HEK293 (cell line): ENCODE measurements at regions of chr15 and their contacts with region 1.

Region 1: DNA sequence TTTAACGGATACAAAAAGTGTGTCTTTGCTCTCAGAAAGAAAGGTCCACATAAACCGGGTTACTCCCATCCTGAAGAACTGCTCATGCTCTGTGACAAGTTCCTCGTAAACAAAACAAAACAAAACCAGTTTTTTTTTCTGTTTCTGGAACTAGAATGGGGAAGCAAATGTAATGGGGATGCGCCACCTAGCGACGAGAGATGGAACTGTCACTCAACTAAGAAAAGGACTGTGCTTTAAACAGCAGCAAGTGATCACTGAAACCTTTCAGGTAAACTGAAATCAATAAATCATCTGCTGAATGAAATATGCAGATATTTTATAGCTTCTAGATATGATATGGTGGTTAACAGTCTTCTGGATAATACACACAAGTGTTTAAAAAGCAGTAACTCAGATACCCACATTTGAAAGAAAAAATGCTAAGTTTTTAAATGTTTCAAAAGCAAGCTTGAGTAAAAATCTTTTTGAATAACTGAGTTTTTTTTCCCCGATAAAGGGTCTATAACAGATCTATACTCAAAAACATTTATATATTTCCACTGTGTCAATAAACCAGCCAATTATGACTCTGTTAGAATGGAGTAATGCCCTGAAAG is 10.9 kb downstream of the TM2D3 start:
- H3K4me3 ChIP-seq: no peak overlapping the region
- H3K27ac ChIP-seq: no peak overlapping the region
- H3K4me1 ChIP-seq: peaks cover 4% of the 10 kb centered on the region; the same call in 1 of the 2 replicates
- CTCF ChIP-seq: peak; percentile 73

Region 2: DNA sequence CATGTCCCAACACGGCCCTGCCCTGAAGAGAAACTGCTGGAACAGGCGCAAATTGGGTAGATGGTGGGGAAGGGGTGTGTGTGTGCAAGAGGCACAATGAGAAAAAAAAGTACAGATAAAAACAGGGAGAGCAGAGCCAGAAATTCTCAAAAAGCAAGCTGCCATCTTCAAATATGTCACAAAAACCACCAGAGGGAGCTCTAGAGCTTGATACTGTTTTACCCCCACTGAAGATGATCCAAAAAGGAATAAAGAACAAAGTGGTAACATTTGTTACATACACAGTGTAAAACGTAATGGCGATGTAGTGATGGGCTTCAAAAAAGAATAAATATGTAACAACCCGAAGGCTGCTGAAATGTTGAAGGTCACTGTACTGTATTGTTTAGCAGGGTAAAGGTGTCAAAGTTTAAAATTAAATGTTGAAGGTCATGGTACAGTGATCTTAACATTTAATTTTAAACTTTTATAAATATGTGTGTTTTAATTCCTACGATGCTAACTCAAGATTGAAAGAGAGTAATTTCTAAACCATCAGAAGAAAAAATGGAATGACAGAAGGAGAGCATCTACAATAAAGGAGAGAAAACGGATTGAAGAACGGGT is 352.3 kb before region 1 on chr15:
- CTCF ChIA-PET with region 1: interaction called, 64 read pairs
- POLR2A ChIA-PET with region 1: no interaction called
- H3K4me3 ChIP-seq: no peak overlapping the region
- H3K27ac ChIP-seq: no peak overlapping the region
- H3K4me1 ChIP-seq: peaks cover 3% of the 10 kb centered on the region
- CTCF ChIP-seq: peak; percentile 50; the same call in 1 of the 2 replicates

Region 3: DNA sequence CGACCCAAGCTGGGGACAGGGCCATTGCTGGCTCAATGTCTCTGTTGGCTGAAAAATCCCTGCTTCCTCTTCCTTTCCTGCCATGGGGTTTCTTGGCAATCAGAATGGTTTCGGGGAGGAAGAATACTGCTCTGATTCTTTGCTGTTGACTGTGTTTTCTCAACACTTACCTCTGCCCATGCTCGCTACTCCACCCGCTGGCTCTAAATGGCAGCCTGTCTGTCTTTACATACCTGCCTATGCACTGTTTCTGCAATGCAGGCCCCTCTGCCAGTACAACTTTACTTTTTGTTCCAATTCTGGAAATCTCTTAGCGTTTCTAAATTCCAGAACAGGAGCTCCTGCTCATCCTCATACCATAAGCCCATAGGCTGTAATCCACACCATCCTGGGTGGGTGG is 307.9 kb before region 1 on chr15:
- CTCF ChIA-PET with region 1: interaction called, 13 read pairs
- POLR2A ChIA-PET with region 1: no interaction called
- H3K4me3 ChIP-seq: no peak overlapping the region
- H3K27ac ChIP-seq: no peak overlapping the region
- H3K4me1 ChIP-seq: no peaks in the 10 kb centered on the region
- CTCF ChIP-seq: no peak

Region 4: GRCh38 chr15:101510212-101511197 is 130.8 kb before region 1 on chr15:
- CTCF ChIA-PET with region 1: interaction called, 10 read pairs
- POLR2A ChIA-PET with region 1: no interaction called
- H3K4me3 ChIP-seq: no peak overlapping the region
- H3K27ac ChIP-seq: no peak overlapping the region
- H3K4me1 ChIP-seq: no peaks in the 10 kb centered on the region
- CTCF ChIP-seq: no peak

Region 5: GRCh38 chr15:101579631-101580141 is 61.6 kb before region 1 on chr15:
- CTCF ChIA-PET with region 1: interaction called, 16 read pairs
- POLR2A ChIA-PET with region 1: no interaction called
- H3K4me3 ChIP-seq: no peak overlapping the region
- H3K27ac ChIP-seq: no peak overlapping the region
- H3K4me1 ChIP-seq: no peaks in the 10 kb centered on the region
- CTCF ChIP-seq: no peak

Region 6: GRCh38 chr15:101615986-101616848 is 25.0 kb before region 1 on chr15:
- CTCF ChIA-PET with region 1: interaction called, 61 read pairs
- POLR2A ChIA-PET with region 1: interaction called, 6 read pairs
- H3K4me3 ChIP-seq: no peak overlapping the region
- H3K27ac ChIP-seq: peak overlapping the region; percentile 9; the same call in 1 of the 2 replicates
- H3K4me1 ChIP-seq: peaks cover 22% of the 10 kb centered on the region
- CTCF ChIP-seq: no peak

Region 7: DNA sequence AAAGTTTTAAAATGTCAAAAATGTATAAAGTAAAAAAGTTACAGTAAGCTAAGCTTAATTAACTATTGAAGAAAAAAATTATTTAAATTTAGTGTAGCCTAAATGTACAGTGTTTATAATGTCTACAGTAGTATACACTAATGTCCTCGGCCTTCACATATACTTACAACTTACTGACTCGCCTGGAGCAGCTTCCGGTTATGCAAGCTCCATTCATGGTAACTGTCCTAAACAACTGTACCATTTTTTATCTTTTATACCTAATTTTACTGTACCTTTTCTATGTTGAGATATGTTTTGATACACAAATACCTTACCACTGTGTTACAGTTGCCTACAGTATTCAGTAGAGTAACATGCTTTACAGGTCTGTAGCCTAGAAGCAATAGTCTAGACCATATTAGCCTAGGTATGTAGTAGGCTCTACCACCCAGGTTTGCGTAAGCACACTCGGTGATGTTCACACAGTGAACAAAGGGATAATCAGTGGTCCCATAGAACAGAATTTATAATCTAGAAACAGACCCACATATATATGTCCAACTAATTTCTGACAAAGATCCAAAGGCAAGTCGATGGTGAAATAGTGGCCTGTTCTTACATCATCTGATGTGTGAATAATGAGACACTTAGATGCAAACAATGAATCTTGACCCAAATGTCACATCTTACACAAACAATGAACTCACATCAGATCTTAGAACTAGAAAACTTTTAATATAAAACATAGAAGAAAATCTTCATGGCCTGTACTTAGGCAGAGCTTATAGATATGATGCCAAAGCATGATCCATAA is 28.3 kb after region 1 on chr15:
- CTCF ChIA-PET with region 1: interaction called, 12 read pairs
- POLR2A ChIA-PET with region 1: interaction called, 5 read pairs
- H3K4me3 ChIP-seq: no peak overlapping the region
- H3K27ac ChIP-seq: no peak overlapping the region
- H3K4me1 ChIP-seq: no peaks in the 10 kb centered on the region
- CTCF ChIP-seq: no peak